Calu3 (cell line): ENCODE measurements at regions of chr3 and their contacts with region 1.

Region 1: GRCh38 chr3:152595975-152596790 is 238.7 kb upstream of the P2RY1 start:
- DNase-seq: peak; percentile 72
- H3K4me3 Mint-ChIP-seq: peak overlapping the region; percentile 9
- H3K27ac Mint-ChIP-seq: peak overlapping the region; percentile 69
- H3K4me1 Mint-ChIP-seq: peaks cover 45% of the 10 kb centered on the region
- H3K27me3 Mint-ChIP-seq: no peaks in the 10 kb centered on the region
- CTCF ChIP-seq: no peak

Region 2: DNA sequence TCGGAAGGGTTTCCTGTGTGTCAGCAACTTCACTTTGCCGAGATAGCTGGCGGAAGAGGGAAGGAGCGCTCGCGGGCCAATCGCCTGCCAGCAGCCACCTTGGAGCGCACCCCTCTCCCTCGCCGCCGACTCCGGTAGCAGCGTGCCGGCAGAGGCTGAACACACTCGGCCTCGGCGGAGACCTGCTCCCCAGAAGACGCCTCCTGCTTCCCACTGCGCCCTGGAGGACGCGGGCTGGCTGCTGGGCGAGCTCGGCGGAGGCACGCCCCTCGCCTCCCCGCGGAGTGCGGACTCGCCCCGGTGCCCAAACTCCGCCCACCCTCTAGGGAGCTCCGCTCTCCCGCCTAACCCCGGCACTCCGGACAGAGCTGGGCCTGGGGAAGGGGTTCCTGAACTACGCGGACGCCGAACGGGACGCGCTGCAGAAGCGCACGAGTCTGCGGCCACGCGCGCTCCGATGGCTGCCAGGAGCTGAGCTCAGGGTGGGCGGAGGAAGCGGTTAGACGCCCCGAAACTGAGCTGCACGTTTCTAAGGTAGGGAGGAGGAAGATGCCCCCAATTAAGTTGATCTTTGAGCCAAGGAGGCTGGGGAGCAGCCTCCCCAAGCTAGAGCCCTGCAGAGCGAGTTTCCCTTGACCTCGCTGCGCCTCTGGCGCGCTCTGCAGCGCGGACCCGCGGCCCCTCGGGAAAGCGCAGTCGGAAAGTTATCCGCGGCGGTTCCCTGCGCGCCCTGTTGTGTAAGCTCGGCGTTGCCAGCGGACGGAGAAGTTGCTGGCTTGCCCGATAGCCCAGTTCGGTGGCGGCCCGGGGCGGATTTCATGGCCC is 238.8 kb after region 1 on chr3 and contains the start of gene P2RY1:
- CTCF ChIA-PET with region 1: no interaction called
- intact Hi-C with region 1: loop called (anchors 10 kb)
- DNase-seq: peak; percentile 91
- H3K4me3 Mint-ChIP-seq: peak within 1 kb of the TSS; percentile 85
- H3K27ac Mint-ChIP-seq: peak within 1 kb of the TSS; percentile 46
- H3K4me1 Mint-ChIP-seq: peaks cover 59% of the 10 kb centered on the region
- H3K27me3 Mint-ChIP-seq: no peaks in the 10 kb centered on the region
- CTCF ChIP-seq: peak; percentile 52
- total RNA-seq, gene P2RY1: 19.6 and 21.0 TPM in 2 replicates